ENCODE measurements at regions of chr22 and their contacts with region 1.

Region 1: DNA sequence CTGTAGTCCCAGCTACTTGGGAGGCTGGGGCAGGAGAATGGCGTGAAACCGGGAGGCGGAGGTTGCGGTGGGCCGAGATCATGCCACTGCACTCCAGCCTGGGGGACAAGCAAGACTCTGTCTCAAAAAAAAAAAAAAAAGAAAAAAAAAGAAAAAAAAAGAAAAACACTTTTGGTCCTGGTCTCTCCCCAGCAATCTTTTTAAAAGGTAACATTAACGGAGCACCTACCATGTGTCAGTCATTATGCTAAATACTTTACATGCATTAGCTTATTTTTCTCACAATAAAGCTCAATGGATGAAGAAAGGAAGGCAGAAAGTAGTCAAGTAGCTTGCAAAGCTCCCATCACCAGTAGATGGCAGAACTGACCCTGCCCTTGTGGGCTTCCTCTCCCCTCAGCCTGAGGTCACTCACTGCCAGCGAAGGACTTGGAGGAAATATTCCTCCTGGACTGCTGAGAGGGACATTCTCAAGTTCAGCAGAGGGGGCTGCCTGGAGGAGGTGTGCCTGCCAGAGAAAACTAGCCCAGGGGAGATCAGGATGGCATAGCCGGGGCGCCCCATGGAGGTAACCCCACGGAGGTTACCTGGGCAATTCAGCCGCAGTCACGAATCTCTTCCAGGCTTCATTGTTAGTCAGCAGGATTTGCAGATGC is 15.5 kb downstream of the APOL3 start:
- DNase-seq: peak; percentile 33
- H3K4me3 ChIP-seq: no peak overlapping the region
- H3K27ac ChIP-seq: no peak overlapping the region
- H3K4me1 ChIP-seq: no peaks in the 10 kb centered on the region
- H3K27me3 ChIP-seq: no peaks in the 10 kb centered on the region
- CTCF ChIP-seq: peak; percentile 69 to 79

Region 2: DNA sequence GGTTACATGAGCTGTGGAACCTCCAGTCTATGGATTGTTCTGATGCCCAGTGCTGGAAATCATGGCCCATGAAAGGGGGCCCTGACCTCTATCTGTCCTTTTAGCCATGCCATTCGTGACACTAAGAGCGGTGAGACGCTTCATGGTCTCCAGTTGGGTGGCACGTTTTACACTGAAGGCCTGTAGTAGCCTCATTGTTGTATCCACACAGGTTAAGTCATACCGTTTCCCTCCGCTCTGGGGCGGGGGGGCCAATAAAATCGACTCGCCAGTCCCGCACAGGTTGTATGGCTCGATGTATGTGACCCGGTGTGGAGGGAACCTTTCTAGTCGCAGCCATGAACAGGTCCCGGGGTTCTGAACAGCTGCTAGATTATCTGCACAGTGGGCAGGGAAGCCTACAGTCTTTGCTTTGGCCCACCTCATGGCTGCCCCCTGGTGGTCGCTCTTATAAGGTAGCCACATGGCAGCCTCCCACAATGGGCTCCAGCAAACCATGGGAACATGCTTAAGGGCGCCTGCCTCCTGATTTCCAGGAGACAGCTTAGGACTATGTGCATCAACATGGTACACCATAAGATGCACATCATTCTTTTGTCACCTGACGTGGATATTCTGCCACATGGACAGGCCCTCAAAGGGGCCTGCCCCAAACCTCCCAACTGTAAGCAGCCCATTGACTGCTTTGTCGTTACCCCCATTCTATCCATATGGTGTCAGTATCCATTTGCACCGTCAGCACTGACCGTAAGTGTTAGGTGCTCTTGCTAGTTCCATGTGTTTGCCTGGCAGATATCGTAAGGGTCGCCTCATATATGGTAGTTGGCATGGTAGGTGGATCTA is 35.2 kb after region 1 on chr22:
- CTCF ChIA-PET with region 1: no interaction called
- dilution Hi-C with region 1: loop called (anchors 5 kb)
- in situ Hi-C with region 1: loop called in 1 of 2 experiments (anchors 5 kb)
- intact Hi-C with region 1: loop called (anchors 1 kb)
- DNase-seq: peak; percentile 35
- H3K4me3 ChIP-seq: no peak overlapping the region
- H3K27ac ChIP-seq: no peak overlapping the region
- H3K4me1 ChIP-seq: no peaks in the 10 kb centered on the region
- H3K27me3 ChIP-seq: peaks cover 3% of the 10 kb centered on the region
- CTCF ChIP-seq: peak; percentile 86 to 91

Region 3: GRCh38 chr22:36221799-36222751 is 77.1 kb after region 1 on chr22:
- CTCF ChIA-PET with region 1: no interaction called
- dilution Hi-C with region 1: no loop called
- in situ Hi-C with region 1: no loop called
- intact Hi-C with region 1: loop called (anchors 1 kb)
- DNase-seq: peak; percentile 28
- H3K4me3 ChIP-seq: no peak overlapping the region
- H3K27ac ChIP-seq: no peak overlapping the region
- H3K4me1 ChIP-seq: no peaks in the 10 kb centered on the region
- H3K27me3 ChIP-seq: no peaks in the 10 kb centered on the region
- CTCF ChIP-seq: peak; percentile 76 to 83

Region 4: DNA sequence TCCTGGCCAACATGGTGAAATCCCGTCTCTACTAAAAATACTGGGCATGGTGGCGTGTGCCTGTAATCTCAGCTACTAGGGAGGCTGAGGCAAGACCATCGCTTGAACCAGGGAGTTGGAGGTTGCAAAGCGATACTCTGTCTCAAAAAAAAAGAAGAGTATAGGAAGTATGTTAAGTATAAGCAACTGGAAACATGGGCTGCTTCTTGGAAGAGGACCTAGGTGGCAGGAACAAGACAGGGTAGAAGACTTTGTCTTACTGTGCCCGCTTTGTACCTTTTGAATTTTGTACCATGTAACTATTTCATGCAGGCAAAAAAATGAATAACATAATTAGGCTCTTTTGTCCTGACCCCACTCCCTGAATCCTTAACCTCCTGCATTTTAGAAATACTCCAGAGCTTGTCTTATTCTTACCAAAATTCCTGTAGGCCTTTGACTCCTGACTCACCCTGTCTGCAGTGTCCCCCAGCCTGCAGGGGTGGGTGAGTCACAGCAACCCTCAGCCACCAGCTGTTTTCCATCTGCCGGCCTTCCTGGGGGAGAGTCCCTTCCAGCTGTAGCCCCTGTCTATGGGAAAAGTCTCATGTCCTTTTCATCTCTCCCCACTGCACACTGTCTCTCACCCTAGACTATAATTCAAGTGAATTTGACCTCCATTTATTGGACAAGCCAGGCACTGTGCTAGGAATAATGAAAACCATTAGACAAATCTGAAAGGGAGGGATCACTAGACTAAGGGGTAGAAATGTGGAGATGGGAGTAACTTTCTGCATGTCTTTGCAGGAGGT is 294.7 kb after region 1 on chr22:
- CTCF ChIA-PET with region 1: no interaction called
- dilution Hi-C with region 1: no loop called
- in situ Hi-C with region 1: no loop called
- intact Hi-C with region 1: no loop called
- DNase-seq: peak; percentile 83
- H3K4me3 ChIP-seq: no peak overlapping the region
- H3K27ac ChIP-seq: no peak overlapping the region
- H3K4me1 ChIP-seq: peaks cover 39% of the 10 kb centered on the region
- H3K27me3 ChIP-seq: no peaks in the 10 kb centered on the region
- CTCF ChIP-seq: no peak

Region 5: DNA sequence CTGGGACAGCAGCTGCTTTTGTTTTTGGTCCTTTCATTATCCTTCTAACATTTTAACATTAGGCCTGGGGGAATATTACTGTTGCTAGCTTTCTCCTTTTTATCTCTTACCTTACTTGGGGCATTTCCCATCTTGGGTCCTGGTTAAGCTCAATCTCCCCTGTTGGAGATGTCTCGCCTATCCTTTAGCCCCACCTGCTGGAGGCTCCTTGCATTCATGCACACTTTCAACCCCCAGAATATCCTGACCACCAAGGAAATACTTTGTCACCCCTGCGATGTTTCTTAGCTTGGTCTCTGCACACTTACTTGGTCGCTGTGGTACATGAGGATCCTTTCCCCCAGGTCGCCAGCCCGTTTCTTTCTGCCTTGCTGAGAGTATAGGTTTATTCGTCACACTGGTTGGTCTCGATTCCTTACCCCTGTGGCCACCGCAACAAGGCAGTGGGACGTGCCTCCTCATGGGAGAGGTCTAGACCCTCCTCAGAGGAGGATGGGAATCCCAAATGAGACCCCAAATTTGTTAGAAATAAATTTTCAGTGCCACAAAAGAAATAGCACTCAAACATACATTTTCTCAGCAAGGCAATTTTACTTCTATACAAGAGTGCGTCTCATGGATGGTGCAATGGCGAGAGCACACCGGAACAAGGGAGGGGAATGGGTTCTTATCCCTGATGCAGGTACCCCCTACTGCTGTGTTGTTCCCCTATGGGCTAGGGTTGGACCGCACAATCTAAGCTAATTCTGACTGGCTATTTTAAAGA is 341.8 kb after region 1 on chr22:
- CTCF ChIA-PET with region 1: interaction called, 5 read pairs
- dilution Hi-C with region 1: no loop called
- in situ Hi-C with region 1: loop called in 1 of 2 experiments (anchors 25 kb)
- intact Hi-C with region 1: loop called (anchors 1 kb)
- DNase-seq: peak; percentile 47
- H3K4me3 ChIP-seq: no peak overlapping the region
- H3K27ac ChIP-seq: no peak overlapping the region
- H3K4me1 ChIP-seq: peaks cover 6% of the 10 kb centered on the region
- H3K27me3 ChIP-seq: no peaks in the 10 kb centered on the region
- CTCF ChIP-seq: peak; percentile 66 to 82